Right ventricle myocardium inferior (tissue), 1 donor: ENCODE measurements at regions of chr17 and their contacts with region 1.

Region 1: DNA sequence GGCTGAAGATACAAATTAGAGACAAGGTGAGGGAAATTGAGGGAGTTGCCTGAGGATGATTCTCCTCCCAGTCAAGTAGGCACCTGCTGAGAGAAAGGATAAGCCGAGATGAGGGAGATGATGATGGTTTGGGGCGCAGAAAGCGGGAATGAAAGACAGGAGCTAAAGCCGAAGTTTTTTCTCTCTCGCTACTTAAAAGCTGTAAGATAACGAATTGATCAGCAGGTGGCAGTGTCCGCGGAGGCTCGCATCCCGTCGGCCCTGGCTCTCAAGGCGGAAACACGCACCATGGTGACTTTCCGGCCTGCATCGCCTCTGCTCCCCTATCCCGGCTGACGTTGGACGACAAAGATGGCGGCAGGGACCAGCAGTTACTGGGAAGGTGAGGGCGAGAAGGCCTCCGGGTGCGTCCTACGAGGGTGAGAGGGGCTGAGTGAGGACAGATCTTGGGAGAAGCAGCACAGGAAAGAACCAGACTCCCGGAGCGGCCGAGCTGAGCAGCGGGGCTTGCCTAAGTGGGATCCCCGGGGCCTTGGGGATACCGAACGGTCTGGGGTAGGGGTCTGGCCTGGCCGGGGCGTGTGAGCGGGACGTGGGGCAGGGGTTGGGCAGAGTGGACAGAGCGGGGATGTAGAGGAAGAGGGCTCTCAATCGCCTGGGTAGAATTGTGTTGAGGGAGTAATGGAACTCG is at the start of gene GOSR1:
- DNase-seq: peak; percentile 95
- ATAC-seq: peak; percentile 100
- total RNA-seq, gene GOSR1: 28.8 TPM

Region 2: DNA sequence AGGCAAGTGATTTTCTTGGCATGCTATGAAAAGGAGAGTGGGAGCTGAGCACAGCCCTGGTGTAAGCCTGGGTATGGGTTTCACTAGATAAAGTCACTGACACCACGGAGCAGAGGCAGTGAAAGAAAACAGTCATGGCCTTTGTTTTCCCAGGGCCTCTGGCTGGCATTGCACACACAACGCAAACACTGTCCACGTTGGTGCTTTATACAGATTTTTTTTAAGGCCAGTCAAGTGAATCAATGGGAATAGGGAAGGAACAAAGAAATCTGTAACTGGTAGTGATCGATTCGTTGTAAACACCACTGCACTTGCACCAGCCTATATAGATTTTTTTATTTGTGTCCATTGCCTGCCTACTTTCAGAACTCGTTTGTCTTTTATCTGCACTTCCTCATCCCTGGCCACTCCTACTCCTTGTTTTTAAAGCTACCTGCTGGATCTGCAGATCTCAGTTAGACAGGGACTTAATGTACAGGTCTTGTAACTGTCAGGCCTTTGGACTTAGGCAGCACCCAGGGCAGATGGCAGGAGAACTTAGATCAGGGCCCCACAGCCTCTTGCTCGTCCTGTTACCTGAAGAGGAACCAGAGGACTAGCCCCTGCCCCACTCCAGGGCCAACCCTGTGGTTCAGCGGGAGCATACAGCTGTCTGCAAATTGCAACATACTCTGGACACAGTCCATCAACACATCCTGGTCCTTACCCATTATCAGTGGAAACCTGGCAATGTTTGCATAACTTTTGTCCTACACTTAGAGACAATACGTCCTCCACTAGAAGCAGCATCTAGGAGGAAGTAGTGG is 132.7 kb before region 1 on chr17:
- intact Hi-C with region 1: loop called (anchors 10 kb)
- DNase-seq: peak; percentile 72
- ATAC-seq: peak; percentile 87

Region 3: GRCh38 chr17:30600049-30600829 is 123.0 kb after region 1 on chr17:
- intact Hi-C with region 1: loop called (anchors 2 kb)
- DNase-seq: peak; percentile 93
- ATAC-seq: peak; percentile 99